Natural killer cell (primary cell): ENCODE measurements at regions of chr1 and their contacts with region 1.

Region 1: DNA sequence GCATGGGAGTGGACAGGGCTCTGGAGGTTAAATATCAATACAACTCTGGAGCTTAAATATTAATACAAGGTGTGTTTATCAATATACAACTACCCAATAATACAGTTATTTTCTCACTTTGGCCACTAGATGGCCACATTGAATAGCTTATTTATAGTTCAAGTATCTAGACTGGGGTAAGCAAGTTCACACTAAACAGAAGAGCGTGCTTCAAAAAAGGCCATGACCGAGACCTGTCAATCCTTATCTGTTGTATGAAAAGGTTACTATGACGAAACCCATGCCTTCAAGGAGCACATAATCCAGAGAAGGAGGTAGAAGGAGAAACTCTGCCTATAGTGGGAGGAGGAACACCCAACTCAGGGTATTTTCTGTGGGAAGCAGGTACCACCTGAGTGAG is 29.1 kb downstream of the CHML start:
- DNase-seq: peak in 1 of 2 donors; percentile 77
- ATAC-seq: peak; percentile 72 to 85 (median 72)
- H3K4me3 ChIP-seq: no peak overlapping the region
- H3K4me3 Mint-ChIP-seq: no peak overlapping the region
- H3K27ac ChIP-seq: no peak overlapping the region
- H3K27ac Mint-ChIP-seq: no peak overlapping the region
- H3K4me1 ChIP-seq: no peaks in the 10 kb centered on the region
- H3K4me1 Mint-ChIP-seq: no peaks in the 10 kb centered on the region
- H3K27me3 ChIP-seq: no peaks in the 10 kb centered on the region
- H3K27me3 Mint-ChIP-seq: no peaks in the 10 kb centered on the region
- CTCF ChIP-seq: peak; percentile 71

Region 2: GRCh38 chr1:241627453-241628259 is 16.6 kb after region 1 on chr1:
- intact Hi-C with region 1: loop called (anchors 1 kb)
- DNase-seq: peak in 1 of 2 donors; percentile 81
- ATAC-seq: peak in 2 of 3 donors; percentile 71 to 91
- H3K4me3 ChIP-seq: no peak overlapping the region
- H3K4me3 Mint-ChIP-seq: peak overlapping the region; percentile 65
- H3K27ac ChIP-seq: peak overlapping the region; percentile 49
- H3K27ac Mint-ChIP-seq: peak overlapping the region; percentile 36 to 82
- H3K4me1 ChIP-seq: no peaks in the 10 kb centered on the region
- H3K4me1 Mint-ChIP-seq: peaks cover 8% of the 10 kb centered on the region in 2 donors
- H3K27me3 ChIP-seq: no peaks in the 10 kb centered on the region
- H3K27me3 Mint-ChIP-seq: no peaks in the 10 kb centered on the region
- CTCF ChIP-seq: peak; percentile 63

Region 3: GRCh38 chr1:241857131-241857530 is 246.1 kb after region 1 on chr1:
- intact Hi-C with region 1: no loop called
- DNase-seq: no peak
- ATAC-seq: no peak
- H3K4me3 ChIP-seq: no peak overlapping the region
- H3K4me3 Mint-ChIP-seq: no peak overlapping the region
- H3K27ac ChIP-seq: no peak overlapping the region
- H3K27ac Mint-ChIP-seq: no peak overlapping the region
- H3K4me1 ChIP-seq: no peaks in the 10 kb centered on the region
- H3K4me1 Mint-ChIP-seq: no peaks in the 10 kb centered on the region
- H3K27me3 ChIP-seq: no peaks in the 10 kb centered on the region
- H3K27me3 Mint-ChIP-seq: no peaks in the 10 kb centered on the region
- CTCF ChIP-seq: no peak

Region 4: DNA sequence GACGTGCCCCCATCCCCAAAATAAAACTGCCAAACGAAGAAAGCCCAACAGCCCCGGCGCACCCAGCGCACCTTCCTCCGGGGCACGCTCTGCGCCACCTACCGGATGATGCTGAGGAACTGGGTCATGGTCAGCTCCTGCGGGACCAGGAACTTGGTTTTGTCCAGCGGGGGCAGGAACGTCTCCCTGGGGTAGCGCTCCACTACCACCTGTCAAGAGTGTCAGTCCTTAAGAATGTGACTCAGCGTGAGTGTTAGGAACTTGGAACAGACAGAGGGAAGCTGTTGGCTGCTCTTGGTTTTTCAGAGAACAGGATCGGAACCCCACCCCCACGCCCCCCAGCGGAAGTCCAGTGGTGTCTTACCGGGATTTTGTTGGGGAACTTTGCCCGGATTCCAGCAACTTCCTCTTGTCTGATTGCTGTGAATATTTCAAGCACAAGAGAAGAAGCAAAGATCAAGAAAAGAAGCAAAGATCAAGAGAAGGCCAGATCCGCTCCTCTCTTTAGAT is 387.4 kb after region 1 on chr1:
- intact Hi-C with region 1: loop called (anchors 1 kb)
- DNase-seq: peak; percentile 39 to 61
- ATAC-seq: peak; percentile 60 to 85 (median 76)
- H3K4me3 ChIP-seq: no peak overlapping the region
- H3K4me3 Mint-ChIP-seq: peak overlapping the region; percentile 66
- H3K27ac ChIP-seq: no peak overlapping the region
- H3K27ac Mint-ChIP-seq: no peak overlapping the region
- H3K4me1 ChIP-seq: peaks cover 4% of the 10 kb centered on the region
- H3K4me1 Mint-ChIP-seq: peaks cover 6% of the 10 kb centered on the region in 2 donors
- H3K27me3 ChIP-seq: no peaks in the 10 kb centered on the region
- H3K27me3 Mint-ChIP-seq: no peaks in the 10 kb centered on the region
- CTCF ChIP-seq: peak; percentile 78

Region 5: DNA sequence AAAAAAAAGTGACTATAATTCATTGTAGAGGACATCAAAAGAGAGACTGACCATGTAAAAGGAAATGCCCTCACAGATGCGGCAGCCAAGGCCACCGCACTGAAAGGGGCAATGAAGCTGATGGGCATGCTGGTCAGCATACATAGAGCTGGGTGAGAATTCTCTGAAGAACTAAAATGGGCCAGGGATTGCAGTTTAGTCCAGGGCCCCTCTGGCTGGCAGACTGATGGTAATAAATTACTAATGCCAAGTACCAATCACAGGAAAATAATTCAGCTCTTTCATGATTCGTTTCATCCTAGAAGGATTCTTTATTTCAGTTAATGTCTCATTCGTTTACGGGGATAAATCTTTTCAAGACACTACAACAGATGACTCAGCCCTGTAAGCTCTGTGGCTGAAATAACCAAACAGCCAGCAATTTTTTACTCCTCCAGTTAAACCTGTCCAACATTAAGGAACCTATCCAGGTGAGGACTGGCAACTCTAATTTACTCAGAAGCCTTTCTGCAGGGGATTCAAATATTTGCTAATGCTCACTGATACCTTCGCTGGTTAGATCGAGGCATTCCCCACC is 444.8 kb after region 1 on chr1:
- intact Hi-C with region 1: no loop called
- DNase-seq: no peak
- ATAC-seq: no peak
- H3K4me3 ChIP-seq: no peak overlapping the region
- H3K4me3 Mint-ChIP-seq: no peak overlapping the region
- H3K27ac ChIP-seq: no peak overlapping the region
- H3K27ac Mint-ChIP-seq: no peak overlapping the region
- H3K4me1 ChIP-seq: no peaks in the 10 kb centered on the region
- H3K4me1 Mint-ChIP-seq: no peaks in the 10 kb centered on the region
- H3K27me3 ChIP-seq: no peaks in the 10 kb centered on the region
- H3K27me3 Mint-ChIP-seq: no peaks in the 10 kb centered on the region
- CTCF ChIP-seq: no peak